Activated CD4-positive, alpha-beta memory T cell treated with anti-CD3 and anti-CD28 coated beads for 36 hours (primary cell): ENCODE measurements at regions of chr9 and their contacts with region 1.

Region 1: GRCh38 chr9:4315582-4316215 is 15.8 kb upstream of the GLIS3 start:
- DNase-seq: peak; percentile 85
- H3K4me3 Mint-ChIP-seq: no peak overlapping the region
- H3K27ac Mint-ChIP-seq: no peak overlapping the region
- H3K4me1 Mint-ChIP-seq: no peaks in the 10 kb centered on the region
- H3K27me3 Mint-ChIP-seq: no peaks in the 10 kb centered on the region

Region 2: GRCh38 chr9:4327504-4328191 is 11.9 kb after region 1 on chr9:
- CTCF ChIA-PET with region 1: interaction called, 30 read pairs
- POLR2A ChIA-PET with region 1: no interaction called
- intact Hi-C with region 1: no loop called
- DNase-seq: no peak
- H3K4me3 Mint-ChIP-seq: no peak overlapping the region
- H3K27ac Mint-ChIP-seq: no peak overlapping the region
- H3K4me1 Mint-ChIP-seq: peaks cover 8% of the 10 kb centered on the region
- H3K27me3 Mint-ChIP-seq: peaks cover 9% of the 10 kb centered on the region

Region 3: GRCh38 chr9:4366591-4367330 is 51.1 kb after region 1 on chr9:
- CTCF ChIA-PET with region 1: interaction called, 138 read pairs
- POLR2A ChIA-PET with region 1: no interaction called
- intact Hi-C with region 1: loop called (anchors 1 kb)
- DNase-seq: peak; percentile 45
- H3K4me3 Mint-ChIP-seq: no peak overlapping the region
- H3K27ac Mint-ChIP-seq: no peak overlapping the region
- H3K4me1 Mint-ChIP-seq: peaks cover 2% of the 10 kb centered on the region
- H3K27me3 Mint-ChIP-seq: peaks cover 6% of the 10 kb centered on the region

Region 4: GRCh38 chr9:4375424-4376200 is 59.9 kb after region 1 on chr9:
- CTCF ChIA-PET with region 1: interaction called, 9 read pairs
- POLR2A ChIA-PET with region 1: no interaction called
- intact Hi-C with region 1: loop called (anchors 2 kb)
- DNase-seq: no peak
- H3K4me3 Mint-ChIP-seq: no peak overlapping the region
- H3K27ac Mint-ChIP-seq: no peak overlapping the region
- H3K4me1 Mint-ChIP-seq: no peaks in the 10 kb centered on the region
- H3K27me3 Mint-ChIP-seq: peaks cover 11% of the 10 kb centered on the region

Region 5: GRCh38 chr9:4640027-4640426 is 324.3 kb after region 1 on chr9:
- CTCF ChIA-PET with region 1: interaction called, 11 read pairs
- POLR2A ChIA-PET with region 1: no interaction called
- intact Hi-C with region 1: loop called (anchors 1 kb)
- DNase-seq: peak; percentile 61
- H3K4me3 Mint-ChIP-seq: no peak overlapping the region
- H3K27ac Mint-ChIP-seq: no peak overlapping the region
- H3K4me1 Mint-ChIP-seq: no peaks in the 10 kb centered on the region
- H3K27me3 Mint-ChIP-seq: no peaks in the 10 kb centered on the region